Left cardiac atrium (tissue), 4 donors: ENCODE measurements at regions of chr16 and their contacts with region 1.

Region 1: GRCh38 chr16:8878521-8878911 is 3.6 kb upstream of the LITAFD start:
- DNase-seq: no peak
- ATAC-seq: peak; percentile 36 to 67

Region 2: DNA sequence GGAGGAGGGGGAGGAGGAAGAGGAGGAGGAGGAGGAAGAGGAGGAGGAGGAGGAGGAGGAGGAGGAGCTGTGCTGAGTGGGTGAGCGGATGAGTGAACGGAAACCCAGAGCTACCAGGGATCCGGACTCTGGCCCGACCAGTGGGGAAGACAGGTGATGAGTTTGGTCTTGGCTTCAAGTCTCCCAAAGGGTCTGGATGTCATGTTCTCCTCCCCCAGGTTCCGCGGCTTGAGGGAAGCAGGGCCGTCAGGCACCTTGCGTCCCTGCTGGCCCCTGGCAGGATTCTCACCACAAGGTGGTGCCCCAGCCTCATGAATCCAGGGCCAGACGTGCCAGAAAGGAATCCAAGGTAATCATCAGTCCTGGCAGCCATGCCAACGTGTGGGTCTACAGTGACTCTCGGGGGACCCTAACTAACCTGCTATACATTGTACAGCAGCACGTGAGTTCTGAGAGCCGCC is 217.6 kb before region 1 on chr16:
- intact Hi-C with region 1: loop called (anchors 5 kb)
- DNase-seq: peak; percentile 66
- ATAC-seq: peak; percentile 82 to 87

Region 3: GRCh38 chr16:8740775-8741355 is 137.7 kb before region 1 on chr16:
- intact Hi-C with region 1: no loop called
- DNase-seq: no peak
- ATAC-seq: peak; percentile 67 to 80

Region 4: DNA sequence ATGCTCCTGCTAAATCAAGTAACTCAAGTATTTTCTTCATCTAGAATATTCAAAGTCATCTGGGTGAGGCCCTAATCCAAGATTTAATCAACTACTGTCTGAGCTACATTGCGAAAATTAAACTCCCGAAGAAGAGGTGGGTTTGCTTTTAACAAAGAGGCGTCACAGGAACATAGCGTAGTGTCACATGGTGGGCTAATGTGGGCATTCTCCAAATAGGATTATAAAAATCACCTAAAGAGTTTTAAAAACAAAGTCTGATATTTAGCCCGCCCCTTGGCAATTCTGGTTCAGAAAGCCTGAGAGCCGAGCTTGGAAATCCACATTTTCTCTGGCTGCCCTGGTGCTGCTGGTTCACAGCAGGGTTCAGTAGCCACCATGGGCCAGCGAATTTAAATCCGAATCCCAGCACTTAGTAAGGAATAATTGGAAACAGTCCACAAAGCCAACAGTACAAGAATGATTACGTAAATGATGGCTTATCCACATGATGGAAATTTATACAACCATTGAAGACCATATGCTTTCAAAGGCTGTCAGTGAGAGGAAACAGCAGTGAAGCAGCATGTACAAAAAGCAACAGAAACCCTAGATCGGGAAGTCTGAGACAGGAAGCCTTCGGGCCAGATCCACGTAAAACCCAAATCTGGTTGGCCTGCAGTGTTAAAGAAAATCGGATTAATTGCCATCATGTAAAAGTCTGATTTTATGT is 72.1 kb before region 1 on chr16:
- intact Hi-C with region 1: loop called in 1 of 2 experiments (anchors 10 kb)
- DNase-seq: no peak
- ATAC-seq: no peak

Region 5: DNA sequence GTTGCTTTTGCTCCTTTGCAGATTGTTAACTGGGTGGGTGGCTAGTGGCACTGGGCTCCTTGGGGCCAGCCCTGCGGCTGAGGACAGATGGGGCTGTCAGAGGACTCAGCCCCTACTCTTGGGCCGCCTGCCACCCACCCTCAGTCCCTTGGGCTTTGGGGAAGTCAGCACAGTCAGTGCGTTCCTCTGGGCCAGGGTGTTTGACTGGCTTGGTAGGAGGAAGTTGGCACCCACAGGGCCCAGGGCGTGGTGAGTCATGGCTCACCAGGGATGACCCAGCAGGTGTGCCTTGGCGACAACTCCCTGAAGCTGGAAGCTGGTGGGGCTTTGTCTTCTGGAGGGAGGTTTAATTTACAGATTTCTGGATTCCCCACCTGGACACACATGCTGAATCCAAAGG is 245.4 kb after region 1 on chr16:
- intact Hi-C with region 1: no loop called
- DNase-seq: peak; percentile 62
- ATAC-seq: peak in 1 of 2 donors; percentile 63